ENCODE measurements at regions of chr15 and their contacts with region 1.

Region 1: GRCh38 chr15:81939604-81940440 is 106.0 kb downstream of the MEX3B start:
- DNase-seq: peak; percentile 65
- H3K4me3 ChIP-seq: no peak overlapping the region
- H3K27ac ChIP-seq: no peak overlapping the region
- H3K4me1 ChIP-seq: no peaks in the 10 kb centered on the region
- H3K27me3 ChIP-seq: peaks cover 1 to 3% of the 10 kb centered on the region in 2 experiments
- CTCF ChIP-seq: peak; percentile 50 to 61
- POLR2A ChIP-seq: no peak

Region 2: DNA sequence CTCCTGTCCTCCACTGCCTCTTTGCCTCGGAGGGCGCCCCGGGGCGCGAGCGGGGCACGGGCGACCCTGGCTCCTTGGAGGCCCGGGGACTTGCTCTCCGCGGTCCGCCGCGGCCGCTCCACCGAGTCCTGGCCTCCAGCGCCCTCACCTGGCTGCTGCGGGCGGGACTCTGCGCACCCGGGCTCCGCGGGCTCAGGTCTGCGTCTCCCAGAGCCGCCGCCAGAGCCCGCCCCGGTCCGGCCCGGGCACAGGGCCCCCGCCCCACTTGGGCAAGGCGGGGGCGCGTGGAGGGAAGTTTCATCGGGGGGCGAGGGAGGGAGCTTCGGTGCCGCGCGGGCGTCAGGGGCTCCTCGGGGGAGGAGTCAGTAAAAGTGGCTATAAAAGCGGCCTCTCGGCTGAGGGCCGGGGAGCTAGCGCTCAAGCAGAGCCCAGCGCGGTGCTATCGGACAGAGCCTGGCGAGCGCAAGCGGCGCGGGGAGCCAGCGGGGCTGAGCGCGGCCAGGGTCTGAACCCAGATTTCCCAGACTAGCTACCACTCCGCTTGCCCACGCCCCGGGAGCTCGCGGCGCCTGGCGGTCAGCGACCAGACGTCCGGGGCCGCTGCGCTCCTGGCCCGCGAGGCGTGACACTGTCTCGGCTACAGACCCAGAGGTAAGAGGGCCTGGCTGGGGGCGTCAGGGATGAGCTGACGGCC is 1160.7 kb before region 1 on chr15 and contains the start of gene CEMIP:
- CTCF ChIA-PET with region 1: no interaction called
- POLR2A ChIA-PET with region 1: no interaction called
- dilution Hi-C with region 1: no loop called
- intact Hi-C with region 1: no loop called
- DNase-seq: peak; percentile 72
- H3K4me3 ChIP-seq: peak within 1 kb of the TSS in 2 of 3 experiments; percentile 11 to 22
- H3K27ac ChIP-seq: no peak within 1 kb of the TSS
- H3K4me1 ChIP-seq: peaks cover 18% of the 10 kb centered on the region
- H3K27me3 ChIP-seq: peaks cover 17% of the 10 kb centered on the region in 2 experiments
- CTCF ChIP-seq: peak; percentile 77 to 83
- POLR2A ChIP-seq: no peak
- total RNA-seq, gene CEMIP: not detected in 2 replicates

Region 3: GRCh38 chr15:81924729-81925128 is 15.1 kb before region 1 on chr15:
- CTCF ChIA-PET with region 1: no interaction called
- POLR2A ChIA-PET with region 1: no interaction called
- dilution Hi-C with region 1: no loop called
- intact Hi-C with region 1: no loop called
- DNase-seq: no peak
- H3K4me3 ChIP-seq: no peak overlapping the region
- H3K27ac ChIP-seq: no peak overlapping the region
- H3K4me1 ChIP-seq: no peaks in the 10 kb centered on the region
- H3K27me3 ChIP-seq: no peaks in the 10 kb centered on the region
- CTCF ChIP-seq: no peak
- POLR2A ChIP-seq: no peak

Region 4: DNA sequence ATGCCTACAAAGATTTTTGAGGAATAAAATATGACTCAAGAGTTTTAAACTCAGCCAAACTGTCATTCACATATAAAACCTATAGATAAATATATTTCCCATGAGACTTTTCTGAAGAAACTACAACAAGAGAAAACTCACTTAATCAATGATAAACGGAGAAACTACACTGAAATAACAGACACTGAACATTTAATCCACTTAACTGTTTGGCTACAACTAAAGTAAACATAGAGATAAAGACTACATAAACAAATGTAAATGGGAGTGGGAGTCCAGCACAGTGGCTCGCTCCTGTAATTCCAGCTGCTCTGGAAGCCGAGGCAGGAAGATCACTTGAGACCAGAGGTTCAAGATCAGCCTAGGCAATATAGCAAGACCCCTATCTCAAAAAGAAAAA is 26.8 kb after region 1 on chr15:
- CTCF ChIA-PET with region 1: no interaction called
- POLR2A ChIA-PET with region 1: no interaction called
- dilution Hi-C with region 1: no loop called
- intact Hi-C with region 1: no loop called
- DNase-seq: no peak
- H3K4me3 ChIP-seq: no peak overlapping the region
- H3K27ac ChIP-seq: no peak overlapping the region
- H3K4me1 ChIP-seq: no peaks in the 10 kb centered on the region
- H3K27me3 ChIP-seq: no peaks in the 10 kb centered on the region
- CTCF ChIP-seq: no peak
- POLR2A ChIP-seq: no peak

Region 5: GRCh38 chr15:82197733-82198594 is 258.1 kb after region 1 on chr15:
- CTCF ChIA-PET with region 1: interaction called, 5 read pairs
- POLR2A ChIA-PET with region 1: no interaction called
- dilution Hi-C with region 1: no loop called
- intact Hi-C with region 1: loop called (anchors 5 kb)
- DNase-seq: peak; percentile 74
- H3K4me3 ChIP-seq: no peak overlapping the region
- H3K27ac ChIP-seq: no peak overlapping the region
- H3K4me1 ChIP-seq: no peaks in the 10 kb centered on the region
- H3K27me3 ChIP-seq: no peaks in the 10 kb centered on the region
- CTCF ChIP-seq: peak; percentile 75 to 81
- POLR2A ChIP-seq: no peak